PC-9 (cell line): ENCODE measurements at regions of chr4 and their contacts with region 1.

Region 1: GRCh38 chr4:145207934-145208333 is 27.5 kb upstream of the OTUD4 start:
- DNase-seq: no peak
- H3K4me3 ChIP-seq: no peak overlapping the region
- H3K27ac ChIP-seq: no peak overlapping the region
- H3K4me1 ChIP-seq: no peaks in the 10 kb centered on the region
- H3K27me3 ChIP-seq: no peaks in the 10 kb centered on the region
- CTCF ChIP-seq: no peak

Region 2: DNA sequence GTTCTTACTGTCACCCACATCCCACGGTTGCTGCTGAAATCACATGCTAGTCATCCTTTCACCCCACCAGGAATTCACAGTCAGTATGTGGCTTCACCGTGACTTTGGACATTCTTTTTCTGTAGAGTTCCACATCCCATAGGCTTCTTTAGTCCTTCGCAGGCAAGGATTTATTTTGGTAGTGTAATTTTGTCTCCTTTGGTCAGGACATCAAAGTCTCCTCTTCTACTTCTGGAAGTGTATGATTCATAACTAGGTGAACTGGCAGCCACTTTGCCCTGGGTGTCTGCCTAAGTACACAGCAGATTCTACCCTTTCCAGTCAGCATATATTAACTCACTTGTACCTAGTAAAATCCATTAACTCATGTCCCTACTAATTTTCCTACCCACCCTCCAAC is 373.0 kb after region 1 on chr4:
- CTCF ChIA-PET with region 1: no interaction called
- POLR2A ChIA-PET with region 1: no interaction called
- intact Hi-C with region 1: no loop called
- DNase-seq: peak in 1 of 2 experiments; percentile 39
- H3K4me3 ChIP-seq: no peak overlapping the region
- H3K27ac ChIP-seq: no peak overlapping the region
- H3K4me1 ChIP-seq: 0 out of 2 replicates have a peak, but pooled peaks cover 8% of the 10 kb centered on the region
- H3K27me3 ChIP-seq: no peaks in the 10 kb centered on the region
- CTCF ChIP-seq: no peak

Region 3: DNA sequence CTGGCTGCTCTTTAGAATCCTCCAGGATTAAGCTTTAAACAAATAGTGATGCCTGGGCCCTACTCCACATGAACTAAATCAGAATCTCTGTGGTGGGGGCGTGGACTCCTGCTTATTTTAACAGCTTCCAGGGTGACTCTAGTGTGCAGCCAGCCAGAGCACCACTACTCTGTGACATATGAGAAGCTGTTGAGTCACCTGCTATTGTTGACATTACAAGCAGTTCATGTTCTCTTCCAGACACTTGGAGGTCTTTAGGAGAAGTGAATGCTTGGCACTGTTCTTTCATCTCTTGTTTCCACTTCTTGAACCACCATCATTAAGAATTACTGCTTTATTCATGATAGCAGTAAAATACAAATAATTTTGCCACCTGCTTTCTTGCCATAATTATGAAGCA is 471.6 kb after region 1 on chr4:
- CTCF ChIA-PET with region 1: no interaction called
- POLR2A ChIA-PET with region 1: interaction called, 11 read pairs
- intact Hi-C with region 1: no loop called
- DNase-seq: peak; percentile 51 to 77
- H3K4me3 ChIP-seq: no peak overlapping the region
- H3K27ac ChIP-seq: peak overlapping the region; percentile 60
- H3K4me1 ChIP-seq: peaks cover 20% of the 10 kb centered on the region
- H3K27me3 ChIP-seq: no peaks in the 10 kb centered on the region
- CTCF ChIP-seq: no peak

Region 4: DNA sequence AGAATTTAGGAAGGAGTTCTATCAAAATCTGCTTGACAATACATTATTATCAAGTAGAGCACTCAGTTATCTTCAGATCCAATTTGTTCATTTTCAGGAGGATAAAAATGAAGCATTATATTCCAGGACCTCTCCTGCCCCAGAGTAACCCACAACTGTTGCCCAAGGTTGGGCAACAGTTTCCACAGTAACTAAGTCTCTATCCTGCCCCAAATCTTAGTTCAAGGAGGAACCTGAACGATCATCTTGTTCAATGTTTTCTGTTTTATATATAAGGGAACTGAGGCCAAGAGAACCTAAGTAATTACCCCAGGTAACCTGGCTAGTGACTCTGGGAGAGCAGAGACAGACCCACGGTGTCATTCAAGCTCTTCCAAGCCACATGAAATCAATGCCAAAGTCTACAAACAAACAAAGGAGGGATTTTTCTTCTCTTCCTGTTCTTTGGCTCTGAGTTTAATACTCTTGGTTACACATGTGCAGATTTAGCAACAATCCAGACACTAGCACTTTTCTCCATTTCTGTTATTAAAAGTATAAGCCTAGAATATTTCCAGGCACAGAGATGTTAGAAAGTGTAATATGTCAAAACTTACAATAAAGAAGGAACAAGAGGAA is 577.6 kb after region 1 on chr4:
- CTCF ChIA-PET with region 1: no interaction called
- POLR2A ChIA-PET with region 1: no interaction called
- intact Hi-C with region 1: no loop called
- DNase-seq: no peak
- H3K4me3 ChIP-seq: no peak overlapping the region
- H3K27ac ChIP-seq: no peak overlapping the region
- H3K4me1 ChIP-seq: no peaks in the 10 kb centered on the region
- H3K27me3 ChIP-seq: no peaks in the 10 kb centered on the region
- CTCF ChIP-seq: no peak